Right ventricle myocardium inferior (tissue), 1 donor: ENCODE measurements at regions of chr17 and their contacts with region 1.

Region 1: GRCh38 chr17:7004398-7005253 is 7.8 kb upstream of the RNASEK start:
- DNase-seq: no peak
- ATAC-seq: peak; percentile 70

Region 2: GRCh38 chr17:6651357-6651918 is 353.2 kb before region 1 on chr17 and contains the starts of genes C17orf100 and MED31:
- intact Hi-C with region 1: loop called (anchors 5 kb)
- DNase-seq: peak; percentile 98
- ATAC-seq: peak; percentile 100
- total RNA-seq, gene C17orf100: 0.92 TPM
- total RNA-seq, gene MED31: 16.5 TPM

Region 3: GRCh38 chr17:6666077-6666521 is 338.5 kb before region 1 on chr17:
- intact Hi-C with region 1: loop called (anchors 5 kb)
- DNase-seq: no peak
- ATAC-seq: peak; percentile 93

Region 4: GRCh38 chr17:6843241-6843880 is 161.3 kb before region 1 on chr17:
- intact Hi-C with region 1: loop called (anchors 10 kb)
- DNase-seq: no peak
- ATAC-seq: no peak

Region 5: DNA sequence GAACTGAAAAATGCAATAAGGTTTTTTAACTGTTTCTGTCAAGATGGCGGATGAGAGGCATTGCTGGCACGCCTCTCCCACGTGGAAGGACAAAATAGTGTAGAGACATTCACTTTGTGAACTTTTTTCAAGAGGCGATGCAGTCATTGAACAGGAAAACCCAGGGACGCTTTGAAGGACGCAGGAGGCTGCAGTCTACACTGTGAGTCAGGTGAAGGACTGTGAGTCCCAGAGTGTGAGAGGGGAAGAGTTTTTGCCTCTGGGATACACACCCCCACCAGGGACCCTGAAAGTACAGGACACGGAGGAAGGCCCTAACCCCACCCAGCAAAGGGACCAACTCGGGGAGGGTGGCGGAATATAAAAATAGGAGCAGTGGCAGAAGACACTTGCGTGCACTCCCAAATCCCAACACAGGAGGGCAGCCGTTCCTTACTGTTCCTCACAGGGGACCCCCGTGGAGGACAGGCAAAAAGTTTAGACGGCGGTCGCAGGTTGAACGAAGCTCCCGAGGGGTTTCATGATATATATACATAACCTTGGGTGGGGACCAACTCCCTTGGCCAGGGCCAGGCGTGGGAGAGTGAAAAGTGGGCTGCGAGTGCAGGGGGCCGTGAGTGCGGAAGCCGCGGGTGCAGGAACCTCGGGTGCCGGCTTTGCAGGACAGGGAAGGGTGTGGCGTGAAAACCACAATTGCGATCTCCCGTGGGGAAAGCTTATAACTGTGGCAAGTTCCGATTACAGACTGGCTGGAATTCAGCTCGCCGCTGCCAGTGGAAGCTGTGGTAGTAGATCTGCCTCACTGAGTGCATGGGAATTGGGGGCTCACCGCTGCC is 90.8 kb before region 1 on chr17:
- intact Hi-C with region 1: loop called (anchors 1 kb)
- DNase-seq: peak; percentile 76
- ATAC-seq: peak; percentile 81